Mucosa of descending colon (tissue), 3 donors: ENCODE measurements at regions of chrX and their contacts with region 1.

Region 1: DNA sequence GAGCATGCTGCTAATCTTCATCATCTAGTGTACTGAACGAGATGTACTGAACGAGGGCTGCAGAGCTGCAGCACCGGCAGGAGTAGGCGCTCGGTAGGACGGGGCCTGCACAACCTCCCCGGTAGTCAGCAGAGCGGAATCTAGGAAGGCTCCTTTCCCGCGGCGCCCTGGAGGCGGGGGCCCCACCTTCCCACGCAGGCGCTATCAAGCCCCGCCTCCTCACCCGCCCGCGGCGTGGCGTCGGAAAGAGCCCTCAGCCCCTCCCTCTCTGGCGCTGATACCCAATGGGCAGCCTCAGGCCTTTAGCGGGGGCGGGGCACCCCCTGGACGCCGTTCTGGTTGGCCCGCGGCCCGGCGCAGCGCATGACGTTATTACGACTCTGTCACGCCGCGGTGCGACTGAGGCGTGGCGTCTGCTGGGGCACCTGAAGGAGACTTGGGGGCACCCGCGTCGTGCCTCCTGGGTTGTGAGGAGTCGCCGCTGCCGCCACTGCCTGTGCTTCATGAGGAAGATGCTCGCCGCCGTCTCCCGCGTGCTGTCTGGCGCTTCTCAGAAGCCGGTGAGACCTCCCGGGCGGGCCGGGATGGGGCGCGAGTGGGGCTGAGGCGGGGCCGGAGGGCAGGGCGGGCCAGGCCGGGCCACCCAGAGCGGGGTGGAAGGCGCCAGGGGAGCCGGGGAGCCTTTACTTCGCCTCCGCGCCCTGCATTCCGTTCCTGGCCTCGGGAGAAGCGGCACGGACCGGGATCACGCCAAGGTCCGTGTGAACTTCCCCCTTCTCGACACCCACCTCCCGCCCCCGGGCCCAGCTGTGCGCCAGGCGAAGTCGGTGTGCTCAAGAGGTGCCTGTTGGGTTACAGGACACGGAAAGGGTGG is at the start of gene PDHA1:
- DNase-seq: peak; percentile 94 to 96 (median 96)
- ATAC-seq: peak; percentile 97
- H3K4me3 ChIP-seq: peak within 1 kb of the TSS; percentile 40
- H3K4me1 ChIP-seq: peaks cover 3% of the 10 kb centered on the region
- CTCF ChIP-seq: no peak
- total RNA-seq, gene PDHA1: 254 to 412 (median 363) TPM

Region 2: DNA sequence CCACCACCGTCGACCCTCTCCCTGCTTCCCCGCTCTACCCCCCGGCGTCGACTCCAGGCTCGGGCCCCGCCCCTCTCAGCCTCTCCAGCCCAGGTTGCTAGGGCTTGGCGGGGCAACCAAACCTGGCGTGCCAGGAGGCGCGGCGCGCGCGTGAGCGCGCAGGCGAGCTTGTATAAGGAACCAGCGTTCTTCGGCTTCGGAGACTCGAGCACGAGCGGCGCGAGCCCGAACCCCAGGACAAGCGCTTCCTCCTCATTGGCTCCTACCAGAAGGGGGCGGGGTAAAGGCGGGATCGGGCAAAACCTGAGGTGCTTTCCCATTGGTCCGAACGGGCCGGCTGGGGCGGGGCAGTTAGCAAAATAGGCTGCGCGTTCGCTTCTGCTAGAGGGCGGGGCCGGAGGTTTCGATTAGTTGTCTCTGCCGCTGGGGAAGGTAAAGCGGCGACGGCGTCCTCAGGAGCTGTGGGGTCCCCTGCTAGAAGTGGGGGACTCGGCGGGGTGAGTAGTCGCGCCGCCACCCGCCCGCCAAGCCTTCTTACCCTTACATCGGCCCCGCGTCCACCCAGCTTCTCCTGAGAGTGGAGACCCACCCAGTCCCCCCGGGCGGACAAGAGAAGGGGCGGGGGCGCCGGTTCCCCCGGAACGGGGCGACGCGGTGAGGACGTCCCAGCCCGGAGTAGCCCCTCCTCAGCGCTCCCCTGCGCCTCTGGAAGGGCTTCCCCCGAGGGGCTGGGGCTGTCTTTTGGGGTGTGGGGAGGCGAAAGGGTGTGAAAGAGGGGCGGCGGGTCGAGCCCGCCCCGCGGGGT is 918.4 kb before region 1 on chrX and contains the start of gene CDKL5:
- intact Hi-C with region 1: loop called in 1 of 2 experiments (anchors 10 kb)
- DNase-seq: peak; percentile 96 to 98 (median 97)
- ATAC-seq: peak; percentile 98
- H3K4me3 ChIP-seq: peak within 1 kb of the TSS; percentile 48
- H3K4me1 ChIP-seq: no peaks in the 10 kb centered on the region
- CTCF ChIP-seq: no peak
- total RNA-seq, gene CDKL5: 4.0 to 7.5 (median 4.4) TPM